Gastrocnemius medialis (tissue), 4 donors: ENCODE measurements at regions of chr11 and their contacts with region 1.

Region 1: DNA sequence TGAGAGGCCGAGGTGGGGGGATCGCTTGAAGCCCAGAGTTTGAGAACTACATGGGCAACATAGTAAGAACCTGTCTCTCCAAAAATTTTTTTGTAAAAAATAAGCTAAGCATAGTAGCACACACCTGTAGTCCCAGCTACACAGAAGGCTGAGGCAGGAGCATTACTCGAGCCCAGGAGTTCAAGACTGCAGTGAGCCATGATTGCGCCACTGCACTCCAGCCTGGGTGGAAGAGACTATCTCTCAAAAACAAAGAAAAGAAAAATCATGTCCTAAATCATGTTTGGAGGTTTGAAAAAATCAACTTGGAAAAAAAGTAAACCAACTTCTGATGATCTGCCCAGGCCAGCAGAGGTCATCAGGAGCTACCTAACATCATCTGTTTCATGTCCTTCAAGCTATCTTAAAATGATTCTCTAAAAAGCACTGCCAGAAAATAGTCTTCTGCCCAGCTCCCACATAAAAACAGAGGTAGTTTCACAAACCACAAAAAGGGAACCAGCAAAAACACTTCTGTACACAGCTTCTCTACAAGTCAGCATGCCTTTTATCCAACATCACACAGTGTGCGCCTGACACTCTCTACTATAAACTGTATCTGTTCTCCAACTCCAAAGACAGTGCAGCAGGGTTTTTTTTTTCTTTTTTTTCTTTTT is 165.0 kb downstream of the SOX6 start:
- DNase-seq: no peak
- ATAC-seq: no peak
- H3K4me3 ChIP-seq: no peak overlapping the region
- H3K27ac ChIP-seq: no peak overlapping the region
- H3K4me1 ChIP-seq: peaks cover 32 to 39% of the 10 kb centered on the region in 2 donors
- H3K27me3 ChIP-seq: no peaks in the 10 kb centered on the region
- CTCF ChIP-seq: peak in 1 of 5 experiments; percentile 27
- POLR2A ChIP-seq: no peak

Region 2: DNA sequence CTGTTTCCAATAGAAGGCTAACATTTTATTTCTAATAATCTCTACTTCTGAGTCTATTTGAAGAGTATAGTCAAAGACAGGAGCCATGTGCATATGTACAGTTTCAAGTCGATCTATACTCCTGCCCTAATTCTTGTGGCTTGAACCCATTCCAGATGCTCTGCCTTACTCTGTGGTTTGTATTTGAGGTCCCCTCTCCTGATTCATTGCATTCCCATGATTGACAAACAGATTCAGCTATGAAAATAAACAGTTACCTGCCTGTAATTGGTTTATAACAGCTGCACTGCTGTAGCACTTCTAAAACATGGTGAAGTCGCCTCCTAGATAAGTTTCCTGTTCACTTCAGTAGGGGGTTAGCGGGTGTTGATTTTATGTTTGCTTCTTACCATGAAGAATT is 26.3 kb after region 1 on chr11:
- in situ Hi-C with region 1: no loop called
- intact Hi-C with region 1: loop called (anchors 1 kb)
- DNase-seq: no peak
- ATAC-seq: no peak
- H3K4me3 ChIP-seq: no peak overlapping the region
- H3K27ac ChIP-seq: no peak overlapping the region
- H3K4me1 ChIP-seq: peaks cover 16 to 21% of the 10 kb centered on the region in 2 donors
- H3K27me3 ChIP-seq: no peaks in the 10 kb centered on the region
- CTCF ChIP-seq: no peak
- POLR2A ChIP-seq: no peak